ENCODE measurements at regions of chr14 and their contacts with region 1.

Region 1: DNA sequence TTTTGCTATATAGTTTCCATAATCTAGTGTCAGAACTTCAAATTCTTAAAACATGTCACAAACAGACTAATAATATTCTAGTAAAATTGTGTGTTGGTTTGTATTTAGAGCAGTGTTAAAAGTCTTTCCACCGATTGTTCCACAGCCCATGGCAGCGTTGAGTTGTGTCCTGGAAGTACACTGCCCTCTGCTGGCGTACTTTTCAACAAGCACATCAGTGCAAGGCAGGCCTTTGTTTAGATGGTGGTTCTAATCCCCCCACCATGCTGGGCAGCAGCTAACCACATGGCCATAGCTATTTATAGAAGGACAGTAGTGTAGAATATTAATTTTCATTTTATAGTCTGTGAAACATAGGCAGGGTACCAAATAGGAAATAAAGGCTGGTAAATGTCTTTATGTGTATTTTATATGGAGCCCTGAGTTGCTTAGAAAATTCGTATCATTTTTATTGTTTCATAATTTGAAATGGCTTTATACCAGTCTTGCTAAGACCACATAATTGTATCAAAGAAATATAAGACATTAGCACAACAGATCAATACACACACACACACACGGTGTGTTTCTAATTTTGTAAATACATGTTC is 235.4 kb downstream of the SEC23A start:
- DNase-seq: peak; percentile 59
- H3K4me3 Mint-ChIP-seq: no peak overlapping the region
- H3K27ac Mint-ChIP-seq: no peak overlapping the region
- H3K4me1 Mint-ChIP-seq: no peaks in the 10 kb centered on the region
- H3K27me3 Mint-ChIP-seq: peaks cover 4% of the 10 kb centered on the region

Region 2: GRCh38 chr14:38929416-38929815 is 61.8 kb after region 1 on chr14:
- CTCF ChIA-PET with region 1: no interaction called
- POLR2A ChIA-PET with region 1: no interaction called
- DNase-seq: no peak
- H3K4me3 Mint-ChIP-seq: no peak overlapping the region
- H3K27ac Mint-ChIP-seq: no peak overlapping the region
- H3K4me1 Mint-ChIP-seq: no peaks in the 10 kb centered on the region
- H3K27me3 Mint-ChIP-seq: no peaks in the 10 kb centered on the region

Region 3: GRCh38 chr14:39015360-39015961 is 147.8 kb after region 1 on chr14:
- CTCF ChIA-PET with region 1: interaction called, 15 read pairs
- POLR2A ChIA-PET with region 1: no interaction called
- DNase-seq: peak; percentile 23
- H3K4me3 Mint-ChIP-seq: no peak overlapping the region
- H3K27ac Mint-ChIP-seq: no peak overlapping the region
- H3K4me1 Mint-ChIP-seq: no peaks in the 10 kb centered on the region
- H3K27me3 Mint-ChIP-seq: no peaks in the 10 kb centered on the region